Ascending aorta (tissue), 2 donors: ENCODE measurements at regions of chr9 and their contacts with region 1.

Region 1: GRCh38 chr9:34665381-34666250 is 3.2 kb upstream of the CCL27 start:
- DNase-seq: peak; percentile 89 to 98
- H3K4me3 ChIP-seq: peak overlapping the region; percentile 88
- H3K27ac ChIP-seq: peak overlapping the region; percentile 99 to 100
- H3K4me1 ChIP-seq: peaks cover 5 to 14% of the 10 kb centered on the region in 2 donors
- H3K27me3 ChIP-seq: no peaks in the 10 kb centered on the region
- CTCF ChIP-seq: no peak

Region 2: GRCh38 chr9:34396276-34397214 is 269.1 kb before region 1 on chr9:
- intact Hi-C with region 1: no loop called
- DNase-seq: no peak
- H3K4me3 ChIP-seq: no peak overlapping the region
- H3K27ac ChIP-seq: no peak overlapping the region
- H3K4me1 ChIP-seq: no peaks in the 10 kb centered on the region
- H3K27me3 ChIP-seq: no peaks in the 10 kb centered on the region
- CTCF ChIP-seq: no peak

Region 3: GRCh38 chr9:34458013-34458958 is 207.3 kb before region 1 on chr9 and contains the starts of genes DNAI1 and FAM219A:
- intact Hi-C with region 1: loop called (anchors 2 kb)
- DNase-seq: peak; percentile 95 to 99
- H3K4me3 ChIP-seq: peak within 1 kb of the TSS; percentile 79 to 94
- H3K27ac ChIP-seq: peak within 1 kb of the TSS; percentile 76 to 88
- H3K4me1 ChIP-seq: peaks cover 0 to 28% of the 10 kb centered on the region in 2 donors
- H3K27me3 ChIP-seq: no peaks in the 10 kb centered on the region
- CTCF ChIP-seq: no peak
- total RNA-seq, gene DNAI1: not detected
- total RNA-seq, gene FAM219A: 26.8 TPM

Region 4: DNA sequence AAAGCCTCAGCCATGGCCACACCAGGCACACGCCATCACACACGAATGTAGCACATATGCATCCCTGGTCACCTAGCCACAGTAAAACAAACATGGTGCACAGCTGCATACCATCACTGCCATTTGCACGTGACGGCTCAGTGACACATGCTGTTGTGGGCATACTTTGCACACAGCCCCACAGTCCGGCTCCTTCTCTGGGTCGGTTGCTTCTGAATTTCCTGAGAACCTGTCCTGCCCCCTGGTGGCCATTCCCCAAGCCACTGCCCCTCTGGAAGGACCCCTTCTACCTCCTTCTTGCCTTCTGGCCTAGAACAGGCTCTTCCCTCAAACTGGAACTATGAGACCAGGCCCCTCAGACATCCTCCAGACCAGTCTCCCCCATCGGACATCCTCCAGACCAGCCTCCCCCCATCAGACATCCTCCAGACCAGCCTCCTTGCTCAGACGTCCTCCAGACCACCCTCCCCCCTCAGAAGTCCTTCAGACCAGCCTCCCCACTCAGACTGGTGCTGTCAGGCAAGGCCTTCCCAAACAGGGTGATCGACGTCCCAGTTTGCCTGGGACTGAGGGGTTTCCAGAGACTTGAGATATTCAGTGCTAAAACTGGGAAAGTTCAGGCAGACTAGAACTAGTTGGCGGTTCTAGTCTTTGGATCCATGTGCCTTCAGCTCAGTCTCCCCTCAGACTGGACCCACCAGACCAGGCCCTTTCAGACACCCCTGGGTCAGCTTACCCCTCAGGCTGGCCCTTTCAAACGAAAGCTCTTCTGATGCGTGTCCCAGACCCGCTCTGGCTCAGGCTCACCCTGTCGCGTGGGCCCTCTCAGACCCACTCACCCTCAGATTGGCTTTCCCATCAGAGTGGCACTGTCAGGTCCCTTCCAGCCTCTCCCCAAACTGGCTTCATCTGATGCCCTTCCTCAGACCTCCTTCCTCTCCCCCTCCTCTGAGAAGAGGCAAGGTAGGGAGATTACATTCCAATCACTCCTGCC is 118.5 kb before region 1 on chr9:
- intact Hi-C with region 1: no loop called
- DNase-seq: peak in 1 of 2 donors; percentile 75
- H3K4me3 ChIP-seq: no peak overlapping the region
- H3K27ac ChIP-seq: no peak overlapping the region
- H3K4me1 ChIP-seq: no peaks in the 10 kb centered on the region
- H3K27me3 ChIP-seq: no peaks in the 10 kb centered on the region
- CTCF ChIP-seq: peak in 2 of 3 experiments; percentile 32 to 51

Region 5: GRCh38 chr9:34620061-34620994 is 45.3 kb before region 1 on chr9 and contains the start of gene DCTN3:
- intact Hi-C with region 1: loop called (anchors 2 kb)
- DNase-seq: peak; percentile 75 to 98
- H3K4me3 ChIP-seq: peak within 1 kb of the TSS; percentile 73 to 76
- H3K27ac ChIP-seq: no peak within 1 kb of the TSS
- H3K4me1 ChIP-seq: peaks cover 0 to 13% of the 10 kb centered on the region in 2 donors
- H3K27me3 ChIP-seq: no peaks in the 10 kb centered on the region
- CTCF ChIP-seq: peak in 1 of 3 experiments; percentile 3
- total RNA-seq, gene DCTN3: 31.7 TPM

Region 6: GRCh38 chr9:34646211-34647083 is 19.2 kb before region 1 on chr9 and contains the start of gene GALT:
- intact Hi-C with region 1: loop called (anchors 2 kb)
- DNase-seq: peak; percentile 90 to 97
- H3K4me3 ChIP-seq: peak within 1 kb of the TSS; percentile 69 to 80
- H3K27ac ChIP-seq: peak within 1 kb of the TSS; percentile 80 to 83
- H3K4me1 ChIP-seq: peaks cover 17 to 26% of the 10 kb centered on the region in 2 donors
- H3K27me3 ChIP-seq: no peaks in the 10 kb centered on the region
- CTCF ChIP-seq: peak; percentile 26 to 51 (median 35)
- total RNA-seq, gene GALT: 28.3 TPM

Region 7: GRCh38 chr9:34701769-34702736 is 36.4 kb after region 1 on chr9:
- intact Hi-C with region 1: loop called (anchors 1 kb)
- DNase-seq: peak; percentile 20 to 92
- H3K4me3 ChIP-seq: peak overlapping the region; percentile 59 to 73
- H3K27ac ChIP-seq: peak overlapping the region; percentile 87 to 91
- H3K4me1 ChIP-seq: no peaks in the 10 kb centered on the region
- H3K27me3 ChIP-seq: no peaks in the 10 kb centered on the region
- CTCF ChIP-seq: peak; percentile 91 to 99 (median 98)

Region 8: GRCh38 chr9:35116898-35117551 is 451.4 kb after region 1 on chr9:
- intact Hi-C with region 1: loop called (anchors 10 kb)
- DNase-seq: peak; percentile 83 to 96
- H3K4me3 ChIP-seq: peak overlapping the region; percentile 46 to 62
- H3K27ac ChIP-seq: peak overlapping the region; percentile 98 to 99
- H3K4me1 ChIP-seq: peaks cover 15 to 35% of the 10 kb centered on the region in 2 donors
- H3K27me3 ChIP-seq: no peaks in the 10 kb centered on the region
- CTCF ChIP-seq: peak; percentile 88 to 97 (median 97)

Region 9: GRCh38 chr9:36487482-36488388 is 1822.1 kb after region 1 on chr9:
- intact Hi-C with region 1: loop called (anchors 5 kb)
- DNase-seq: peak; percentile 63 to 95
- H3K4me3 ChIP-seq: peak overlapping the region; percentile 74 to 99
- H3K27ac ChIP-seq: peak overlapping the region; percentile 87 to 93
- H3K4me1 ChIP-seq: peaks cover 0 to 25% of the 10 kb centered on the region in 2 donors
- H3K27me3 ChIP-seq: no peaks in the 10 kb centered on the region
- CTCF ChIP-seq: peak in 1 of 3 experiments; percentile 19